Ascending aorta (tissue), 2 donors: ENCODE measurements at regions of chr4 and their contacts with region 1.

Region 1: DNA sequence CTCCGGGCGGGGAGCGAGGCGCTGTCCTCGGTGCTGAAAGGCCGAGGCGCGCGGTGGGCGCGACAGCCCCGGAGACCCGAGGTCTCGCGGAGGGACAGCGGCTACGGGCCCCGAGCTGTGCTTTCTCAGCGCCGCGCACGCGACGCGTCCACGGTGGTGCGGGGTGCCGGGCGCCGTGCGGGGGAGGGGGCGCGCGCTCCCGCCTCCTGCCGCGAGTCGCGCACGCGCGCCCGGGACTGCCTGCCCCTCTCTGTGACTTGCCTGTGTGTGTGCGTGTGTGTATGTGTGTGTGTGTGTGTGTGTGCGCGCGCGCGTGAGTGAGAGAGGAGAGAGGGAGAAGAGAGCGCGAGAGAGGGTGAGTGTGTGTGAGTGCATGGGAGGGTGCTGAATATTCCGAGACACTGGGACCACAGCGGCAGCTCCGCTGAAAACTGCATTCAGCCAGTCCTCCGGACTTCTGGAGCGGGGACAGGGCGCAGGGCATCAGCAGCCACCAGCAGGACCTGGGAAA is at the start of gene GRIA2:
- DNase-seq: peak in 1 of 2 donors; percentile 83
- H3K4me3 ChIP-seq: peak within 1 kb of the TSS; percentile 71 to 79
- H3K27ac ChIP-seq: peak within 1 kb of the TSS; percentile 93 to 95
- H3K4me1 ChIP-seq: peaks cover 0 to 10% of the 10 kb centered on the region in 2 donors
- H3K27me3 ChIP-seq: no peaks in the 10 kb centered on the region
- CTCF ChIP-seq: no peak
- total RNA-seq, gene GRIA2: 3.0 TPM

Region 2: DNA sequence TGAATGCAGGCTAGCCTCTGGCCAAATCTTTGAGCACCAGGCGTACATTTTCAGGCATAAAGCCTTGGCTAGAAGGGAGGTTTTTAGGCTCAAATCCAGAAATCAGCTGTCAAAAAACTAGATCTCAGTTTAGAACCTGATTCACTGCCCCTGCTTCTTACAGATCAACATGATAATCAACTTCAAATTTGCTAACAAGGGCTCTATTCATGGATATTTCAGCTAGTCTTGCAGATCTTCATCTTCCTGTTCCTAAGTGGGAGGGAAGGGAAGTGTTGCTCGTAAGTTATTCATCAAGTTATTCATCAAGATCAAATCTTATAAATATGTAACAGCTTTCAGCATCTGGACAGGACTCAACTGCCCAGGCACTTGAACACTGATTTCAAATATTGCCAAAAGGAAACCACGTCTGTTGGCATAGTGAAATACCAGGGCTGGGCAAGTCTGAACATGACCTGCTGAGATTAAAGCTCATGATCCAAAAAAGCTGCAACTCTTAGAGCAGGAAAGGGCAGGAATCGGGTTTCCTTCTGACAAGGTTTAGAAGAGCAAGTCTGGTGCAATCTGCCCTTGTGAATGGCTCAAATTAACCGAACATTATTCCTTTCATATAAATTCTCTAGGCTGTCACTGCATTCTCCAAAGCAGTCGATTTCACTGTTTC is 449.1 kb before region 1 on chr4:
- intact Hi-C with region 1: loop called (anchors 10 kb)
- DNase-seq: peak in 1 of 2 donors; percentile 73
- H3K4me3 ChIP-seq: peak overlapping the region; percentile 24 to 43
- H3K27ac ChIP-seq: peak overlapping the region; percentile 73 to 80
- H3K4me1 ChIP-seq: peaks cover 6 to 50% of the 10 kb centered on the region in 2 donors
- H3K27me3 ChIP-seq: no peaks in the 10 kb centered on the region
- CTCF ChIP-seq: no peak

Region 3: DNA sequence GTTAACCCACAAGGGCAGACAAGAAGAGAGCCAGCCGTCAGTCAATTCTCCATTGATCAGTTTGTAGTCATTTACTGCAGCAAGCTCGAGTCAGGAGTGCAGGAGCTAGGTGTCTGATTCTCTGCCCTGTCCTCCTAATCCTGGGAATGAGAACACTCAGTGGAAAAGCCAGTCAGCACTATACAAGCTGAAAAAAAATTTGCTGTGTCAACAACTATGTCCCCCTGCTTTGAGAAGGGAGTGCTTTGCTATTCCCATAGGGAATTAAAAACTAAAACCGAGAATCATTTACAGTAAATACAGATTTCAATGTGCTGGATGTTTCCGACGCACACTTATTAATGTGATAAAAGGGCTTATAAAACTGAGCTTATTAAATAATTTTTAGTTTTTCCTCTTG is 84.3 kb after region 1 on chr4:
- intact Hi-C with region 1: loop called (anchors 5 kb)
- DNase-seq: no peak
- H3K4me3 ChIP-seq: no peak overlapping the region
- H3K27ac ChIP-seq: no peak overlapping the region
- H3K4me1 ChIP-seq: peaks cover 0 to 9% of the 10 kb centered on the region in 2 donors
- H3K27me3 ChIP-seq: no peaks in the 10 kb centered on the region
- CTCF ChIP-seq: no peak

Region 4: DNA sequence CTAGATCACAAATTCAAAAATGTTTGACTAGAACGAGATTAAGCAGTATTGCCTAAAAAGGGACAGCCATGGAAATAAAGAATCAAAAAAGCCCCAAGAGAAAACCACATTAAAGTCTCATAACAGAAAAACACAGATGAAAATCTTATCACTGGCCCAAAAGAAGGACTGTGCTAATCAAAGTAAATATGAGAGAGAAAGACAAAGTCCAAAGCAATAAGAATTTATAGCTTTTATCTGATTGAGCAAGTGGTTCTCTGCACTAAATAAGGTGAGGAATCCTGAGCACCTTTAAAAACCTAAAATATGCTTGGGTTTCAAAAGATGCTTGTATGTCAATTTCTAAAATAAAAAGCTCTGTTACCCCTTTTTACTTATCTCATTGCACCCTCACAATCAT is 543.1 kb after region 1 on chr4:
- intact Hi-C with region 1: no loop called
- DNase-seq: no peak
- H3K4me3 ChIP-seq: no peak overlapping the region
- H3K27ac ChIP-seq: no peak overlapping the region
- H3K4me1 ChIP-seq: no peaks in the 10 kb centered on the region
- H3K27me3 ChIP-seq: no peaks in the 10 kb centered on the region
- CTCF ChIP-seq: no peak

Region 5: DNA sequence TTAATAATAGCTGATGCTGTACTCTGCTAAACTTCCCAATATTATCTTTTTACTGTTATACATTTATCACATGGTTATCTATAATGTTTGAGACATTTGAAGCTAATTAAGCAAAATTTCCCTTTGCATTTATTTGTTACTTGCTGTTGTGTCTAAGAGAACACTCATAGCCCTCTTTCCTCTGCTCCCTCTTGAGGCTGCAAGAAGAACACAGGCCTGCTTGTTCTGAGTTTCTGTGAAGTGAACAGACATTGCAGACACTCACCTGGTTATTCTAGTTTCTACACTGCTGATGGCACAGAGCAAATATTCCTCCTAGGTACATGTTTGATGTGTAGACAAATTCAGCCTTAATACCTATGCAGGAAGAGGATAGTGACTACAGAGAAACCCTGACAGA is 584.6 kb after region 1 on chr4:
- intact Hi-C with region 1: loop called (anchors 10 kb)
- DNase-seq: no peak
- H3K4me3 ChIP-seq: no peak overlapping the region
- H3K27ac ChIP-seq: peak overlapping the region; percentile 60 to 77
- H3K4me1 ChIP-seq: peaks cover 0 to 13% of the 10 kb centered on the region in 2 donors
- H3K27me3 ChIP-seq: no peaks in the 10 kb centered on the region
- CTCF ChIP-seq: peak in 2 of 3 experiments; percentile 41 to 54

Region 6: GRCh38 chr4:157978680-157979361 is 758.4 kb after region 1 on chr4:
- intact Hi-C with region 1: loop called (anchors 1 kb)
- DNase-seq: peak in 1 of 2 donors; percentile 72
- H3K4me3 ChIP-seq: peak overlapping the region; percentile 43 to 50
- H3K27ac ChIP-seq: no peak overlapping the region
- H3K4me1 ChIP-seq: peaks cover 0 to 3% of the 10 kb centered on the region in 2 donors
- H3K27me3 ChIP-seq: no peaks in the 10 kb centered on the region
- CTCF ChIP-seq: peak; percentile 77 to 86 (median 82)